PC-3 (cell line): ENCODE measurements at regions of chr1 and their contacts with region 1.

Region 1: GRCh38 chr1:64242895-64243756 is 39.7 kb downstream of the UBE2U start:
- DNase-seq: peak; percentile 72
- ATAC-seq: peak; percentile 57; the same call in 1 of the 2 replicates
- H3K4me3 ChIP-seq: no peak overlapping the region
- H3K27ac ChIP-seq: no peak overlapping the region
- H3K4me1 ChIP-seq: peaks cover 28% of the 10 kb centered on the region
- H3K27me3 ChIP-seq: no peaks in the 10 kb centered on the region
- CTCF ChIP-seq: peak; percentile 81

Region 2: DNA sequence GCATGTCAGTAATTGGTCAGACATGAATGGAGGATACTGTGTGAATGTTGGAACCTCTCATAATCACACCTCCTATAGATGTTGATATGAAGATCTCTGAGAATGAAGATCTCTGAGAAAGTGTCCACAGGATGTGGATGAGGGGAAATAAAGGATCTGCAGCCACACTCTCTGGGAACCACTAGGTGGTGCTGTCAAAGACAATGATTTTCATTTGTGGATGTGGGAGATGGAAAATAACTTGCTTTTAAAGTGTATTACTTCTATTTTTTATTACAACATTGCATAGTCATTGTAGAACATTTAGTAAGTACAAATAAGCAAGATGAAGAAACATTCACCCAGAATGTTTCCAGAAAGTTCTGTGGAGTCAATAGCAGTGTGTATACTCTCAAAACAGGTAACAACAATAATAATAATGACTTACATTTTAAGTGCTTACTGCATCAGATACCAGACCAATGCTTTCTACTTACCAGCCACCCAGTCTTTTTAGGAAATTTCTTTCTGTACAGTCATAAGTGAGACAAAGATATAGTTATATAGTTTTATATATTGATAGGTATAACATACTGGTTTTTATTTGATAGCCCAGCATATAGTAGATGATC is 1331.0 kb before region 1 on chr1:
- CTCF ChIA-PET with region 1: interaction called, 10 read pairs
- POLR2A ChIA-PET with region 1: no interaction called
- intact Hi-C with region 1: loop called (anchors 10 kb)
- DNase-seq: peak; percentile 57
- ATAC-seq: peak; percentile 40; the same call in 1 of the 2 replicates
- H3K4me3 ChIP-seq: no peak overlapping the region
- H3K27ac ChIP-seq: no peak overlapping the region
- H3K4me1 ChIP-seq: no peaks in the 10 kb centered on the region
- H3K27me3 ChIP-seq: peaks cover 38% of the 10 kb centered on the region
- CTCF ChIP-seq: peak; percentile 88

Region 3: GRCh38 chr1:63569640-63570316 is 673.3 kb before region 1 on chr1:
- CTCF ChIA-PET with region 1: no interaction called
- POLR2A ChIA-PET with region 1: no interaction called
- intact Hi-C with region 1: loop called (anchors 5 kb)
- DNase-seq: no peak
- ATAC-seq: no peak
- H3K4me3 ChIP-seq: no peak overlapping the region
- H3K27ac ChIP-seq: no peak overlapping the region
- H3K4me1 ChIP-seq: no peaks in the 10 kb centered on the region
- H3K27me3 ChIP-seq: no peaks in the 10 kb centered on the region
- CTCF ChIP-seq: no peak

Region 4: DNA sequence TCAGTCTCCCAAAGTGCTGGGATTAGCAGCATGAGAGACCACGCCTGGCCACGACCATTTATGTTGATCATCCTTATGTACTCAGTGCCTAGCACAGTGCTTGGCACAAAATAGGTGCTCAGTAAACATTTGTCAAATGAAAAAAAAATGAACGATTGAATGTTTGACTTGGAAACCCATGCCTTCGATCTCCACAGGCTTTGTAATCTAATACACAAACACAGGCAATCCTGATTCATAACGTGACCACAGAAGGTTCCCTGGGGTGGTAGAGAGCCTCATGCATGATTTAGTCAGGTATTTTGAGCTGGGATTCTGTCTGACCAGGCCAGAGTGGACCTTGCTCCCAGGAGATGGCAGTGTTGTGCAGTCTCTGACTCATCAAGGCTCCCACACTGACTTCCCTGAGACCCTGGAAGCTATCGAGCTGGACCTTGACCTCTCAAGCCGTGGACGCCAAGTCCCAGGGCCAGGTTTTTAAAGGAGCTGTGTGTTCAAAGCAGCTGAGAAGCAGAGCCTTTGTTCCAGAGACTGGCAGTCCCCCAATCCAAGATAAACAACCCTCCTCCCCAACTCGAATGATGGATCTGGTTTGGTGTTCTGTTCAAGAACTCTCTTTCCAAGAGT is 568.8 kb before region 1 on chr1:
- CTCF ChIA-PET with region 1: interaction called, 4 read pairs
- POLR2A ChIA-PET with region 1: no interaction called
- intact Hi-C with region 1: loop called (anchors 1 kb)
- DNase-seq: peak; percentile 96
- ATAC-seq: peak; percentile 98
- H3K4me3 ChIP-seq: no peak overlapping the region
- H3K27ac ChIP-seq: peak overlapping the region; percentile 60
- H3K4me1 ChIP-seq: peaks cover 14% of the 10 kb centered on the region
- H3K27me3 ChIP-seq: no peaks in the 10 kb centered on the region
- CTCF ChIP-seq: peak; percentile 89

Region 5: GRCh38 chr1:63773815-63774616 is 469.1 kb before region 1 on chr1 and contains the start of gene ROR1:
- CTCF ChIA-PET with region 1: no interaction called
- POLR2A ChIA-PET with region 1: no interaction called
- intact Hi-C with region 1: loop called (anchors 1 kb)
- DNase-seq: peak; percentile 87
- ATAC-seq: peak; percentile 88
- H3K4me3 ChIP-seq: peak within 1 kb of the TSS; percentile 93
- H3K27ac ChIP-seq: peak within 1 kb of the TSS; percentile 85
- H3K4me1 ChIP-seq: peaks cover 34% of the 10 kb centered on the region
- H3K27me3 ChIP-seq: no peaks in the 10 kb centered on the region
- CTCF ChIP-seq: peak; percentile 72
- total RNA-seq, gene ROR1: 16.5 and 22.6 TPM in 2 replicates

Region 6: DNA sequence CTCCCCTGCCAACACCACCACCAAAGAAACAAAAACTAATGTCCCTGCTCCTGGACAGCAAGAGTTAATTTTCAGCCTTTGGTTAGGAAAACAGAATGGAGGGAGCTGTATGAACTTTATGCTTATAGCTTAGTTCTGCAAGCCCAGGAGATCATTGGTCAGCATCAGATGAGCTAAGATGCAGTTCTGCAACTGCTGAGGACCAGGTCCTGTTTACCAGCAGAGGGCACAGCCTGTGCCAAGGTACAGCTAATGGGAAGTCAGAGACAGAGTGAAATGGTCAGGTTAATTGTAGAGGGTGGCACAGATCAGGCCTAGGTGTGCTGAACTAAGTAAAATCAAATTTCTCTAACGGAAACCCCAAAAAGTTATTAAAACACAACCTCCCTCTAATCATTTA is 308.0 kb before region 1 on chr1:
- CTCF ChIA-PET with region 1: interaction called, 3 read pairs
- POLR2A ChIA-PET with region 1: no interaction called
- intact Hi-C with region 1: loop called (anchors 1 kb)
- DNase-seq: peak; percentile 63
- ATAC-seq: peak; percentile 84
- H3K4me3 ChIP-seq: no peak overlapping the region
- H3K27ac ChIP-seq: no peak overlapping the region
- H3K4me1 ChIP-seq: no peaks in the 10 kb centered on the region
- H3K27me3 ChIP-seq: no peaks in the 10 kb centered on the region
- CTCF ChIP-seq: peak; percentile 75

Region 7: GRCh38 chr1:64163970-64164369 is 79.2 kb before region 1 on chr1:
- CTCF ChIA-PET with region 1: no interaction called
- POLR2A ChIA-PET with region 1: no interaction called
- intact Hi-C with region 1: loop called (anchors 5 kb)
- DNase-seq: peak; percentile 44
- ATAC-seq: peak; percentile 61; the same call in 1 of the 2 replicates
- H3K4me3 ChIP-seq: no peak overlapping the region
- H3K27ac ChIP-seq: no peak overlapping the region
- H3K4me1 ChIP-seq: no peaks in the 10 kb centered on the region
- H3K27me3 ChIP-seq: no peaks in the 10 kb centered on the region
- CTCF ChIP-seq: peak; percentile 74